Natural killer cell (primary cell): ENCODE measurements at regions of chr12 and their contacts with region 1.

Region 1: GRCh38 chr12:116157845-116158267 is 119.6 kb downstream of the MED13L start:
- DNase-seq: no peak
- ATAC-seq: peak in 1 of 3 donors; percentile 18
- H3K4me3 ChIP-seq: no peak overlapping the region
- H3K4me3 Mint-ChIP-seq: no peak overlapping the region
- H3K27ac ChIP-seq: no peak overlapping the region
- H3K27ac Mint-ChIP-seq: peak overlapping the region in 1 of 2 donors; percentile 29
- H3K4me1 ChIP-seq: no peaks in the 10 kb centered on the region
- H3K4me1 Mint-ChIP-seq: peaks cover 45 to 56% of the 10 kb centered on the region in 2 donors
- H3K27me3 ChIP-seq: no peaks in the 10 kb centered on the region
- H3K27me3 Mint-ChIP-seq: no peaks in the 10 kb centered on the region
- CTCF ChIP-seq: no peak

Region 2: GRCh38 chr12:116172224-116172849 is 14.5 kb after region 1 on chr12:
- intact Hi-C with region 1: loop called (anchors 2 kb)
- DNase-seq: peak in 1 of 2 donors; percentile 31
- ATAC-seq: peak; percentile 82 to 92 (median 86)
- H3K4me3 ChIP-seq: peak overlapping the region; percentile 0
- H3K4me3 Mint-ChIP-seq: peak overlapping the region; percentile 80
- H3K27ac ChIP-seq: peak overlapping the region; percentile 4
- H3K27ac Mint-ChIP-seq: peak overlapping the region; percentile 77 to 84
- H3K4me1 ChIP-seq: no peaks in the 10 kb centered on the region
- H3K4me1 Mint-ChIP-seq: peaks cover 49 to 55% of the 10 kb centered on the region in 2 donors
- H3K27me3 ChIP-seq: no peaks in the 10 kb centered on the region
- H3K27me3 Mint-ChIP-seq: no peaks in the 10 kb centered on the region
- CTCF ChIP-seq: no peak

Region 3: DNA sequence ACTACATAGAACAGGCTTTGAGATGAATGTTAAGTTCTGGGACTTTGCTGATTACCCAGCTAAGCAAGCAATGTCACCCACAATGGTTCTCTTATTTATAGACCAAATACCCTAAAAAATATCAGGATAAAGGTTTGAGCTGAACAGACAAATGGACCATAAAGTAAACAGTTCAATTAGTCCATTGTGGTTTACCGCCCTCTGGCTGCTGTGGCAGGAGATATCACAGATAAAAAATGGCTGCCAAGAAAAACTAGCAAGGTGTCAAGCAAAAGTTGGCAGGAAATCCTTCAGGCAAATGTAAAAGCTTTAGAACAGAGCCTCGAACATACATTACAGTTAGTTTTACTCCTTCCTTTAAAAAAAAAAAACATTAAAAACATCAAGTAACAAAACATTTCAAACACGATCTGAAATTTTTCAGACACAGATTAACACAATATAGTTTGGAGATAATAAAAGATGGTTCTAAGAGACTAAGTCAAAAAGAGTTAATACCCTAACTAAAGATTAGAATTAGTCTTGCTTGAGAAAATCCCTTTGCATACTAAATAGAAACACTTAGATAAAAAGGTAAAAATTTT is 78.4 kb after region 1 on chr12:
- intact Hi-C with region 1: no loop called
- DNase-seq: peak; percentile 40 to 76
- ATAC-seq: peak; percentile 62 to 90 (median 82)
- H3K4me3 ChIP-seq: no peak overlapping the region
- H3K4me3 Mint-ChIP-seq: peak overlapping the region; percentile 45
- H3K27ac ChIP-seq: no peak overlapping the region
- H3K27ac Mint-ChIP-seq: peak overlapping the region; percentile 73 to 80
- H3K4me1 ChIP-seq: no peaks in the 10 kb centered on the region
- H3K4me1 Mint-ChIP-seq: peaks cover 29 to 35% of the 10 kb centered on the region in 2 donors
- H3K27me3 ChIP-seq: no peaks in the 10 kb centered on the region
- H3K27me3 Mint-ChIP-seq: no peaks in the 10 kb centered on the region
- CTCF ChIP-seq: peak; percentile 67